AG04449 (cell line): ENCODE measurements at regions of chr19 and their contacts with region 1.

Region 1: GRCh38 chr19:11587302-11587974 is 9.8 kb upstream of the ZNF627 start:
- DNase-seq: no peak
- H3K4me3 ChIP-seq: no peak overlapping the region; the same call in 1 of the 2 replicates
- CTCF ChIP-seq: peak; percentile 87

Region 2: DNA sequence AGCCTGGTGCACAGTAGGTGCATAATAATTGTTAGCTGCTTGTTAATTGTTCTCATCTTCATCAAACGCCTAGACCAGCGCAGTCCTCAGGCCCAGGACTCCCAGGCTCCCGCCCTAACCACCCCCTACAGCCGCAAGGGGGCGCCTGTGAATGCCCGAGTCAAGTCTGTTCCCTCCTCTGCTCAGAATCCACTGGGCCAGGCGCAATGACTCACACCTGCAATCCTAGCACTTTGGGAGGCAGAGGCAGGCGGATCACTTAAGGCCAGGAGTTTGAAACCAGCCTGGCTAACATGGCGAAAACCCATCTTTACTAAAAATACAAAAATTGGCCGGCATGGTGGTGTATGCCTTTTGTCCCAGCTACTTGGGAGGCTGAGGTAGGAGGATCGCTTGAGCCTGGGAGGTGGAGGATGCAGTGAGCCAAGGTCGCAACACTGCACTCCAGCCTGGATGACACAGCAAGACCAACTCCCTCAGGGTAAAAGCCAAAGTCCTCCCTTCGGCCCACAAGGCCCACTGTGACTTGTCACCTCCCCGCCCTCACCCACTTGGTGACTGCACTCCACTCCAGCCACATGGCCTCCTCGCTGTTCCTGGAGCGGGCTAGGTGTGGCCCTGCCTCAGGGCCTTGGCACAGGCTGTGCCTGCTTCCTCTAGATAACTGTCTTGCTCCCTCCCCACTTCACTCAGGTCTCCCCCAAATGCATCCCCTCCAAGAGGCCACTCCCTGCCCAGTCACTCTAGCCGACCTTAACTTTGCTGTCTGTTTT is 90.9 kb before region 1 on chr19:
- CTCF ChIA-PET with region 1: interaction called, 18 read pairs
- POLR2A ChIA-PET with region 1: no interaction called
- DNase-seq: peak; percentile 24
- H3K4me3 ChIP-seq: no peak overlapping the region
- CTCF ChIP-seq: peak; percentile 80

Region 3: DNA sequence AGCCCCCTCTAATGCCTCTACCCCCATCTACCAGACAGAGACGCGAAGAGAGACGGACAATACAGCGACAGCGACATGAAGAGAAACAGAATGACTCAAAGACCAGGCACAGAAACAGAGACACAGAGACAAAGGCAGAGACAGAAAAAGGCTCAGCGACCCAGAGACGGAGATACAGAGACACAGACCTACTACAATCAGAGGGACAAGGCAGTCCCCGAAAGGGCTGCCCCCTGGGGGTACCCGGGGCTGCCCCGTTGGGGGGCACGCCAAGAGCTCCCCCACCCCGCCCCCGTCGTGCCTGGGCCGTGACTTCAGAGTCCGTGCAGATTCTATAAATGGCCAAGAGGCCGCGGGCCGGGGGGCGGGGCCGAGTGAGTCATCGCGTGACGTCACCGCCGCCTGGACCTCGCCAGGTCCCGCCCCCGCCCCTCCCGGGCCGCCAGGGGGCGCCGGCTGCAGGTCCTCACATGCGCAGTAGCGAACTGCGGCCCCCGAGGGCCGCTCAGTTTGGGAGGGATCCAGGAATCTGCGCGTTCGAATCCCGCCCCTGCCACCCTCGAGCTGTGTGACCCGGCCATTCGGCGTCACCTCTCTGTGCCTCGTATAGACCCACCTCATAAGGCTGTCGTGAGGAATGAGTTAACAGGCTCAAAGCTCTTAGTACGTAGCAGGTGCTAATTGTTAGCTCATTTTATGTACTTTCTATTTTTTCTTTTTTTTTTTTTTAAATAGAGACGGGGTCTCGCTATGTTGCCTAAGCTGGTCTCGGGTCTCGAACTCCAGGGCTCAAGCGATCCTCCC is 51.4 kb before region 1 on chr19:
- CTCF ChIA-PET with region 1: interaction called, 10 read pairs
- POLR2A ChIA-PET with region 1: no interaction called
- DNase-seq: no peak
- H3K4me3 ChIP-seq: peak overlapping the region; percentile 51
- CTCF ChIP-seq: peak; percentile 89

Region 4: GRCh38 chr19:11558881-11559828 is 28.3 kb before region 1 on chr19 and contains the start of gene ELOF1:
- CTCF ChIA-PET with region 1: interaction called, 123 read pairs
- POLR2A ChIA-PET with region 1: no interaction called
- DNase-seq: peak; percentile 79
- H3K4me3 ChIP-seq: peak within 1 kb of the TSS; percentile 87
- CTCF ChIP-seq: peak; percentile 37